PC-9 (cell line): ENCODE measurements at regions of chr17 and their contacts with region 1.

Region 1: DNA sequence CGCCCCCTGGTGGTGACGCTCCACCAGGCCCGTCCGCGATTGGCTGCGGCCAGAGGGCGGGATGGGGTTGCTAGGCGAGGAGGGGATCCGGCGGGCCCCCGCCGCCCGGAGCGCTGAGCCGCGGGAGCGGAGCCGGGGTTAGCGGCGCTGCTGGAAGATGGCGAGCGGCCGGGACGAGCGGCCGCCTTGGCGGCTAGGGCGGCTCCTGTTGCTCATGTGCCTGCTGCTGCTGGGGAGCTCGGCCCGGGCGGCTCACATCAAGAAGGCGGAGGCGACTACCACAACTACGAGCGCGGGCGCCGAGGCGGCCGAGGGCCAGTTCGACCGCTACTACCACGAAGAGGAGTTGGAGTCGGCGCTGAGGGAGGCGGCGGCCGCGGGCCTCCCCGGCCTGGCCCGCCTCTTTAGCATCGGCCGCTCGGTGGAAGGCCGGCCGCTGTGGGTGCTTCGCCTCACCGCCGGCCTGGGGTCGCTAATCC is at the start of gene CPD:
- DNase-seq: peak; percentile 81 to 96
- H3K4me3 ChIP-seq: peak within 1 kb of the TSS; percentile 84
- H3K27ac ChIP-seq: no peak within 1 kb of the TSS
- H3K4me1 ChIP-seq: peaks cover 73% of the 10 kb centered on the region
- H3K27me3 ChIP-seq: no peaks in the 10 kb centered on the region
- CTCF ChIP-seq: no peak
- total RNA-seq, gene CPD: 44.7 and 55.0 TPM in 2 replicates

Region 2: GRCh38 chr17:30173649-30174048 is 205.2 kb before region 1 on chr17:
- CTCF ChIA-PET with region 1: no interaction called
- POLR2A ChIA-PET with region 1: no interaction called
- intact Hi-C with region 1: no loop called
- DNase-seq: no peak
- H3K4me3 ChIP-seq: no peak overlapping the region
- H3K27ac ChIP-seq: no peak overlapping the region
- H3K4me1 ChIP-seq: peaks cover 24% of the 10 kb centered on the region
- H3K27me3 ChIP-seq: no peaks in the 10 kb centered on the region
- CTCF ChIP-seq: no peak

Region 3: GRCh38 chr17:30309591-30309990 is 69.3 kb before region 1 on chr17:
- CTCF ChIA-PET with region 1: no interaction called
- POLR2A ChIA-PET with region 1: no interaction called
- intact Hi-C with region 1: no loop called
- DNase-seq: no peak
- H3K4me3 ChIP-seq: no peak overlapping the region
- H3K27ac ChIP-seq: no peak overlapping the region
- H3K4me1 ChIP-seq: peaks cover 14% of the 10 kb centered on the region
- H3K27me3 ChIP-seq: no peaks in the 10 kb centered on the region
- CTCF ChIP-seq: no peak

Region 4: DNA sequence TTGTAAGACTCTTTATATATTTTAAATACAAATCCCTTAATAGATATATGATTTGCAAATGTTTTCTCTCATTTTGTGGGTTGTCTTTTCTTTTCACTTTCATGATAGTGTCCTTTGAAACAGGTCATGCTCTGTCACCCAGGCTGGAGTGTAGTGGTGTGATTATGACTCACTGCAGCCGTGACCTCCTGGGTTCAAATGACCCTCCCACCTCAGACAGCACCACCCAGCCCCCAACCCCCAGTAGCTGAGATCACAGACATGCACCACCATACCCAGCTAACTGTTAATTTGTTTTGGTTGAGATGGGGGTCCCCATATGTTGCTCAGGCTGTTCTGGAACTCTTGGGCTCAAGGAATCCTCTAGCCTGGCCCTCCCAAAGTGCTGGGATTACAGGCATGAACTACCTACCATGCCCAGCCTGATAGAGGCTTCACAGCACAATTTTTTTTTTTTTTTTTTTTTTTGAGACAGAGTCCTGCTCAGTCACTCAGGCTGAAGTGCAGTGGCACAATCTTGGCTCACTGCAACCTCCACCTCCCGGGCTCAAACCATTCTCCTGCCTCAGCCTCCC is 26.5 kb before region 1 on chr17:
- CTCF ChIA-PET with region 1: no interaction called
- POLR2A ChIA-PET with region 1: interaction called, 11 read pairs
- intact Hi-C with region 1: no loop called
- DNase-seq: no peak
- H3K4me3 ChIP-seq: no peak overlapping the region
- H3K27ac ChIP-seq: no peak overlapping the region
- H3K4me1 ChIP-seq: 0 out of 2 replicates have a peak, but pooled peaks cover 2% of the 10 kb centered on the region
- H3K27me3 ChIP-seq: no peaks in the 10 kb centered on the region
- CTCF ChIP-seq: no peak

Region 5: DNA sequence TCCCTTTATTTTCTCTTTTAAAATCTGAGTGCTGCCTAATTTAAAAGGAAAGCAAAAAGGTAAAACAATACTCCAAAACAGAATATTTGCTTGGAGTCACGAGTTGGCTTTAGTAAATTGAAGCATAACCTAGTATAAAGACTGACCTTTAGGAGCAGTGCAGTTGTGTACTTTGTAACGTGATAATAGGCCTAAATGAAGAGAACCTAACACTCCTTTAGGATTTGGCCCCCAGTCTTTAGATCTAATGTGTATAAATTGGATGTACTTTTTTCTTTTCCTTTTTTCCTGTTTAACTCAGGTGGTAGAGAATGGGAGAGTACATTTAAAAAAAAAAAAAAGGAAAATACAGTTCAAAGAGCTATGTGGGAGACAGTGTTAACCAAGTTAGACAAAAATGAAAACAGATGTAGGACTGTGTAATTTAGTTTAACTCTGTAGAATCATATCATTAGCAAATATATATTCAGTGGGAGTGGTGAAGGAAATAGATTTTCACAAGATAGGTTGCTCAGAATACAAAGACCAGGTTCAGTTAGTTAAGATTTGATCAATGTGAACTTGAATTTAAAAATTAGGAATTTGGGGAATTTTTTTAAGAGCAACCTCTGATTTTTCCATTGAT is 16.6 kb after region 1 on chr17:
- CTCF ChIA-PET with region 1: interaction called, 23 read pairs
- POLR2A ChIA-PET with region 1: interaction called, 14 read pairs
- intact Hi-C with region 1: no loop called
- DNase-seq: no peak
- H3K4me3 ChIP-seq: no peak overlapping the region
- H3K27ac ChIP-seq: no peak overlapping the region; the same call in 1 of the 2 replicates
- H3K4me1 ChIP-seq: 0 out of 2 replicates have a peak, but pooled peaks cover 10% of the 10 kb centered on the region
- H3K27me3 ChIP-seq: no peaks in the 10 kb centered on the region
- CTCF ChIP-seq: no peak